ENCODE measurements at regions of chrX and their contacts with region 1.

Region 1: GRCh38 chrX:16882702-16883486 is 12.7 kb upstream of the RBBP7 start:
- H3K4me3 ChIP-seq: peak overlapping the region; percentile 48
- H3K27ac ChIP-seq: no peak overlapping the region
- H3K4me1 ChIP-seq: no peaks in the 10 kb centered on the region
- CTCF ChIP-seq: peak; percentile 22; the same call in 1 of the 2 replicates

Region 2: DNA sequence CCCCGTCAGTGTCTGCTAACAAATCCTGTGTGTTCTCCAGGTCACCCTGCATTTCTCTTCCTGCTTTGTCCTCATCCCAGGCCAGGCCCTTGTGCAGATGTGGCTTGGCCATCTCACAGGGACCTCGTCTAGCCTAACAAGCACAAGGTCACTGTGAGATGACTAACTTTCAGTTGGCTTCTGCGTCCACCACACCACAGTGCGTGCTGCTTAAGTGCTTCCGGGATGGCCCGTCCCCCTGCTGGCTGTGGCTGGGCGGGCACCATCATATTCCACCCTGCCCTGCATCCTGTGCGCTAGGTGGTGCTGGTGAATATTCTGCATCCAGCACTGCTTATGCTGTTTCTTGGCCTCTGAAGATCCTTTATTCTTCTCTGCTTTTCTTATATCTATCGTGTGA is 46.5 kb before region 1 on chrX:
- CTCF ChIA-PET with region 1: interaction called, 11 read pairs
- POLR2A ChIA-PET with region 1: no interaction called
- H3K4me3 ChIP-seq: no peak overlapping the region
- H3K27ac ChIP-seq: no peak overlapping the region
- H3K4me1 ChIP-seq: peaks cover 6% of the 10 kb centered on the region; the same call in 1 of the 2 replicates
- CTCF ChIP-seq: peak; percentile 92

Region 3: GRCh38 chrX:16870095-16870860 is 12.6 kb before region 1 on chrX and contains the start of gene RBBP7:
- CTCF ChIA-PET with region 1: interaction called, 59 read pairs
- POLR2A ChIA-PET with region 1: interaction called, 7 read pairs
- H3K4me3 ChIP-seq: peak within 1 kb of the TSS; percentile 98
- H3K27ac ChIP-seq: peak within 1 kb of the TSS; percentile 100
- H3K4me1 ChIP-seq: peaks cover 8% of the 10 kb centered on the region
- CTCF ChIP-seq: no peak; the same call in 1 of the 2 replicates

Region 4: DNA sequence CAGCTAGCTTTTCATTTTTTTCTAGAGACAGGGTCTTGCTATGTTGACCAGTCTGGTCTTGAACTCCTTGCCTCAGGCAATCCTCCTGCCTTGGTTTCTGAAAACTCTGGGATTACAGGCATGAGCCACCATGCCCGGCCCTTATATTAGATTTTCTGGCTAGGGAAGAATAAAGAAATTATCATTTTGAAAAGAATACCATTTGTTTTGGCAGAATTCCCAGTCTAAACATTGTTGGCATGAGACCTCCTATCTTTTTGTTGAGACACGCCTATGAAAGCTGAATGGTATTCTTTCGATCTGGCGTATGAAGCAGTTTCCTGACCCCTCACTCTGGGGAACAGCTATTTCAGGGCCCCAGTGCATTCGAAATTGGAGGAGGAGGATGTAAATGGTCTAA is 170.6 kb after region 1 on chrX:
- CTCF ChIA-PET with region 1: interaction called, 192 read pairs
- POLR2A ChIA-PET with region 1: no interaction called
- H3K4me3 ChIP-seq: no peak overlapping the region
- H3K27ac ChIP-seq: no peak overlapping the region
- H3K4me1 ChIP-seq: no peaks in the 10 kb centered on the region
- CTCF ChIP-seq: no peak

Measured in HEK293 (cell line).